ENCODE measurements at regions of chr14 and their contacts with region 1.

Region 1: DNA sequence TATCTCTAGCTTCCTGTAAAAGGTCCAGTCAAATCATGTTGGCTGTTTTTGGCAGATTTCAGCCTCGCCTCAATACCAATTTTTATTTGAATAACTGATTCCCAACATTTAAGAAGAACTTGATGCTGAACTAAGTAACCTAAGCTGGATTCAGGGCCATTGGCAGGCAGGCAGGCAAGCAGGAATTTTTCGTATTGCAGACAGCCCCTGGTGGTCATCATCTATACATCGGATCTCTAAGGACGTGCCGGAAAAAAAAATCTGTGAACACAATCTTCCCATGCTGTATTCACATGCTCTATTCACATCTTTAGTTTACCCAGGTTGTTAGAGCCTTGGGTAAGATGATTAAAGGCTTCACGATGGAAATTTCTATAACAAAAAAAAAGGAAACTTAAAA is 7.0 kb downstream of the VCPKMT start:
- DNase-seq: no peak
- H3K4me3 ChIP-seq: no peak overlapping the region
- H3K27ac ChIP-seq: no peak overlapping the region
- H3K4me1 ChIP-seq: no peaks in the 10 kb centered on the region
- H3K27me3 ChIP-seq: no peaks in the 10 kb centered on the region
- CTCF ChIP-seq: no peak
- POLR2A ChIP-seq: no peak

Region 2: DNA sequence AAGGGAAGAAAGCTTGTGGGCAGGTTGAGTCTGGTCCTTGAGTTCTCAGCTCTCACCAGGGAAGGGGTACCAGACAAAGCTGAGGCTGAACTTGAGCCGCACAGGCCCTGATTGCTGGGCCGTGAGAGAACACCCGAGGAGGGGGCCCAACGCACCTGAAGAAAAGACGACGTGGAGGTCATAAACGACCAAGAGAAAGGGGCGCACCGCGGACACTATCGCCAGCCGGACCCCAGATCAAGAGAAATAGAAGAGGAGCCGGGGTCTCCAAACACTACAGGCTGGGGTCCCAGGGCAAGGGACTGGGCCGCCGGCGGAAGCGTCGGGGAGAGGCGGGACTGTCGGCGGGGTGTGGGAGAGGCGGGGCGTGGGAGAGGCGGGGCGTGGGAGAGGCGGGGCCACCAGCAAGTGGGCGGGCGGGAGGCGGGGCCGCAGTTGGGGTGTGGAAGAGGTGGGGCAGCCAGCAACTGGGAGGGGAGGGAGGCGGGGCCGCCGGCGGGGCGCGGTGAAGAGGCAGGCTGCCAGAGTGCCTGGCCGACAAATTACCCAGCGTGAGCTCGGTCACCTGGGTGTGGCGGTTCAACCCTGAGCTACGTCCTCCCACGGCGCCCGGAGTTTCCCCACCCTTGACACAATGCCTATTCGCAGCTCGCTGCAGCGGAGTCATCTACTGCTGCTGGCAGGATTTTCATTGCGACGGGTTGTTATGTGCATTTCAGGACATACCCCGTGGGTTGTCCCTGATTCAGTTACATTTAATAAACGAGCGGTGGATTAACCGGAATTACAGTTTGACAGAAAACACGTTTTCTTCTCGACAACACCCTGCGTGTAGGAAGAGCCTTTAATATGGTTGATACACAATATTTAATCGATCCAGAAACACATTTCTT is 241.3 kb before region 1 on chr14:
- intact Hi-C with region 1: loop called (anchors 10 kb)
- DNase-seq: peak; percentile 95 to 96
- H3K4me3 ChIP-seq: peak overlapping the region; percentile 51 to 58
- H3K27ac ChIP-seq: peak overlapping the region; percentile 91 to 93
- H3K4me1 ChIP-seq: peaks cover 0 to 4% of the 10 kb centered on the region in 2 donors
- H3K27me3 ChIP-seq: no peaks in the 10 kb centered on the region
- CTCF ChIP-seq: no peak
- POLR2A ChIP-seq: peak; percentile 68 to 84

Region 3: DNA sequence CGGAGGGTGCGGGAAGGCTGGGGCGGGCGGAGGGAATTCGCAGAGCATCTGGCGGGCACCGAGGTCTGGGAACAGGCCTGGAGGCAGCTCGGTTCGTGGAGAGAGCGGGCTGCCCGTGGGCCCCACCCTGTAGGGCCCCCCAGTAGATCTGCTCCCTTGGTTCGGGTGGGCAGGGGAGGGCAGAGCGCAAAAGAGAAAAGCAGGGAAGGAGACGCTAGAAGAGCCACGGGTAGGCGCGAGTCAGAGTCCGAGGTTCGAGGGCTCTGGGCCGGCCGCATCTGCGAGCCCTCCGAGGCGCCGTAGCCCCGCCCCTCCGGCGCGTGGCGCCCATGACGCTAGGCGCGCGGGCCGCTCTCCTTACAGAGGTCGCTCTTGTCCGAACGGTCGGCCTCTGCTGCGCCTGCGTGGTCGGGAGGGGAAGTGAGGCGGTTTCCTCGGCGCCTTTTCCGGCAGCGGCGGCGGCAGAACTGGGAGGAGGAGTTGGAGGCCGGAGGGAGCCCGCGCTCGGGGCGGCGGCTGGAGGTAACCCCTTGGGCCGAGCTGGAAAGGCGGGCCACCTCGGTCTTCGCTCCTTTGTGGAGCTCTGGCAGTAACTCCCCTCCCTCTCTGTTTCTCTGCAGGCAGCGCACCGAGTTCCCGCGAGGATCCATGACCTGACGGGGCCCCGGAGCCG is 216.6 kb before region 1 on chr14 and contains the start of gene ARF6:
- intact Hi-C with region 1: loop called (anchors 10 kb)
- DNase-seq: peak; percentile 98
- H3K4me3 ChIP-seq: peak within 1 kb of the TSS; percentile 83 to 100
- H3K27ac ChIP-seq: peak within 1 kb of the TSS; percentile 99 to 100
- H3K4me1 ChIP-seq: peaks cover 14% of the 10 kb centered on the region in 2 donors
- H3K27me3 ChIP-seq: no peaks in the 10 kb centered on the region
- CTCF ChIP-seq: peak; percentile 27 to 58 (median 36)
- POLR2A ChIP-seq: peak; percentile 94 to 95
- total RNA-seq, gene ARF6: 21.3 to 70.8 (median 36.1) TPM

Measured in uterus (tissue), 4 donors.